GM18951 (cell line): ENCODE measurements at regions of chr9 and their contacts with region 1.

Region 1: GRCh38 chr9:784202-784601 is 57.3 kb upstream of the DMRT1 start:
- POLR2A ChIP-seq: no peak

Region 2: DNA sequence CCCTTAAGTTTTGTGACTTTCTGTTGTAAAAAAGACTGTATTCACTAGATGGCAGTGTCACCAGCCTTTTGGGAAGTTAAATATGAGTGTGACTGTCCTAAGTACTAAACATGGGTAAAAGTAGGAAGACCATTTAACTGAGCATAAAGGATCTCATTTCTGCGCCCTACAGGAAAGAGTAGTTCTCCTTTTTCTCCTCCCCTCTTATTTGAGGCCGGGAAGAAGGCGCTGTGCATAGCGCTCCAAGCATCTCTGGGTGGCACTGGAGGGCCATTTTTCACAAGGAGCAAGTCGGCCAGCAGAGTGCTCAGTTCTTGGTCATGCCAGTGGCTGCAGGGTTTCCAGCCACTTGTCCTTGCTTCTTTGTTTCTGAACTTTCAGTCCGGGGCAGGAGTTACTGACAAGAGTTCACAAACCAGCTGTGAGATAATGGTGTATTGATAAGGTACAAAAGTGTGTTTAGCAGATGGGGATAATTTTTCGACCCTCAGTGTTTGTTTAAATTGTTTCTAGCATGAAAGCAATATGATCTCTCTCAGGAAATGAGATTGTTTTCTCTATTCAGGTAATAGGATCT is 170.3 kb before region 1 on chr9:
- in situ Hi-C with region 1: loop called (anchors 10 kb)
- POLR2A ChIP-seq: no peak

Region 3: GRCh38 chr9:1100945-1101344 is 316.7 kb after region 1 on chr9:
- in situ Hi-C with region 1: no loop called
- POLR2A ChIP-seq: no peak